B cell (primary cell): ENCODE measurements at regions of chr13 and their contacts with region 1.

Region 1: GRCh38 chr13:110225609-110226562 is 81.1 kb downstream of the COL4A1 start:
- DNase-seq: no peak
- ATAC-seq: no peak
- H3K4me3 ChIP-seq: no peak overlapping the region
- H3K4me3 Mint-ChIP-seq: no peak overlapping the region
- H3K27ac ChIP-seq: no peak overlapping the region
- H3K27ac Mint-ChIP-seq: no peak overlapping the region
- H3K4me1 ChIP-seq: no peaks in the 10 kb centered on the region
- H3K4me1 Mint-ChIP-seq: no peaks in the 10 kb centered on the region
- H3K27me3 ChIP-seq: peaks cover 0 to 3% (median 0%) of the 10 kb centered on the region in 4 experiments
- H3K27me3 Mint-ChIP-seq: peaks cover 4% of the 10 kb centered on the region
- CTCF ChIP-seq: no peak

Region 2: GRCh38 chr13:110444226-110444653 is 218.4 kb after region 1 on chr13:
- CTCF ChIA-PET with region 1: no interaction called
- POLR2A ChIA-PET with region 1: no interaction called
- intact Hi-C with region 1: no loop called
- DNase-seq: no peak
- ATAC-seq: no peak
- H3K4me3 ChIP-seq: no peak overlapping the region
- H3K4me3 Mint-ChIP-seq: no peak overlapping the region
- H3K27ac ChIP-seq: no peak overlapping the region
- H3K27ac Mint-ChIP-seq: no peak overlapping the region
- H3K4me1 ChIP-seq: no peaks in the 10 kb centered on the region
- H3K4me1 Mint-ChIP-seq: peaks cover 13% of the 10 kb centered on the region
- H3K27me3 ChIP-seq: peaks cover 0 to 27% (median 2%) of the 10 kb centered on the region in 4 experiments
- H3K27me3 Mint-ChIP-seq: peaks cover 48% of the 10 kb centered on the region
- CTCF ChIP-seq: no peak

Region 3: DNA sequence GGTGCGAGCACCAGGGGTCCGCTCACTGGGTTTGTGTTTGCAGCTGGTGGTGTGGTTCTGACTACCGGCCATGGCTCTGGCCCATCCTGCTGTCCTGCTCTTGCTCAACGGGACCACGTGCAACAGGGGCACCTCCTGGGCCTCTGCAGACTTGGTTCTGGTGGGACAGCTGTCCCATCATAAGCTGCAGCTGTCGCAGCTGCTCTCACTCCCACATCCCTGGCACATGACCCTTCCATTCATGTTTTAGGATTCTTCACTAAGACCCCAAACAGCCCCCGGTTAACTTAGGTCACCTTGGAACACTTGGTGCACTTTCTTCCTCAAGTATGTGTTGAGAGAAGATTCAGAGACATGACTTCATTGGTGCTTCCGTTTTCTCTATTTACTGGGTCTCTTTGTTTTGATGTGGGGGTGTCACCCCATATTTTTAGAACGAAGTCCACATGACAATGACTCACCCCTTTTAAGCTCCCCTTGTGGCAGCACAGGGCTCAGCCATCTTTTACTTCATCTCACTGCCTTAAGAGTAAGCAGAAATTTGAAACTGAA is 820.8 kb after region 1 on chr13:
- CTCF ChIA-PET with region 1: no interaction called
- POLR2A ChIA-PET with region 1: no interaction called
- intact Hi-C with region 1: loop called (anchors 10 kb)
- DNase-seq: peak; percentile 43
- ATAC-seq: peak; percentile 63
- H3K4me3 ChIP-seq: no peak overlapping the region
- H3K4me3 Mint-ChIP-seq: peak overlapping the region; percentile 38
- H3K27ac ChIP-seq: no peak overlapping the region
- H3K27ac Mint-ChIP-seq: peak overlapping the region; percentile 62
- H3K4me1 ChIP-seq: peaks cover 3 to 8% of the 10 kb centered on the region in 2 donors
- H3K4me1 Mint-ChIP-seq: peaks cover 20% of the 10 kb centered on the region
- H3K27me3 ChIP-seq: no peaks in the 10 kb centered on the region
- H3K27me3 Mint-ChIP-seq: peaks cover 13% of the 10 kb centered on the region
- CTCF ChIP-seq: peak; percentile 28